Activated CD4-positive, alpha-beta T cell treated with anti-CD3 and anti-CD28 coated beads, Interleukin-2, amount 10 ng/mL, durations not matched to agents 24 days and 14 days (primary cell): ENCODE measurements at regions of chrX and their contacts with region 1.

Region 1: GRCh38 chrX:39859991-39860861 is 237.5 kb downstream of the BCOR start:
- DNase-seq: peak; percentile 92
- H3K4me3 Mint-ChIP-seq: peak overlapping the region; percentile 69
- H3K27ac Mint-ChIP-seq: peak overlapping the region; percentile 99
- H3K4me1 Mint-ChIP-seq: peaks cover 34% of the 10 kb centered on the region
- H3K27me3 Mint-ChIP-seq: no peaks in the 10 kb centered on the region

Region 2: DNA sequence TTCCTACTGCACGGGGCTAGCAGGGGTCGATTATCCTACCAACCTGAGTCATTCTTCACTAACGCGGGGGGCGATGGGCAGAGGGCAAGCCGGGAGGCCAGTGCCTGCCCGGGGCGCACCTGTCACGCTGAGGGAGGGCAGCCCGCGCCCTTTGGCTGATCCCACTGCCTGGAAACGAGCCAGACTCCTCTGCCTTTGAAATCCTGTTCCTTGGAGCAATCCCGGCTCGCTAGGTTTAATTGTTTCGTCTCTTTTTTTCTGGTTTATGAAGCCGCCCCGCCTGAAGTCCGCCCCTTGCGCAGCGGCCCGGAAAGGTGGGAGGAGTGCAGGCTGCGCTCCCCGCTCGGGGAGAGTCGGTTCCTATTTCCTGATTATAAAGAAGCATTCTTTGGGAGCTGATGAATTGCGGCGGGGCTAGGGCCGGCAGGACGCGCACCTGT is 246.7 kb before region 1 on chrX:
- intact Hi-C with region 1: loop called (anchors 10 kb)
- DNase-seq: peak; percentile 63
- H3K4me3 Mint-ChIP-seq: peak overlapping the region; percentile 90
- H3K27ac Mint-ChIP-seq: peak overlapping the region; percentile 98
- H3K4me1 Mint-ChIP-seq: peaks cover 26% of the 10 kb centered on the region
- H3K27me3 Mint-ChIP-seq: no peaks in the 10 kb centered on the region

Region 3: DNA sequence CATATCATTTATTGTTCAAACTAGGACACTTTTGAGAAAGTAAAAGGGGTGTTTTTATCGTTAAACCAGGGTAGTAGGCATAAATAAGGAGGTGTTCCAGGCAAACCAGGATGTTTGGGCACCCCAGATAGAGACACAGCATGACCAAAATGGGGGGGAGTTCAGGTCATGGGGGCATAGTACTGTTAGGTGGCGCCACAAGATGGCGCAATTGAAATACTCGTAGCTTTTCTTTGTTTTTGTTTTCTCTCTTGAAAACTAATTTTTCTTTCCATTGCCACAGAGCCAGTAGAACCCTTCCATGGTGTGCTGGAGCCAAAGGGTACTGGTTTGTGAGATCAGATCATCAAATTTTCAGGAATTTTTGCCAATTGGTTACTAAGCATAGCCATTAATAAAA is 45.8 kb before region 1 on chrX:
- intact Hi-C with region 1: loop called (anchors 1 kb)
- DNase-seq: peak; percentile 80
- H3K4me3 Mint-ChIP-seq: no peak overlapping the region
- H3K27ac Mint-ChIP-seq: no peak overlapping the region
- H3K4me1 Mint-ChIP-seq: peaks cover 30% of the 10 kb centered on the region
- H3K27me3 Mint-ChIP-seq: no peaks in the 10 kb centered on the region

Region 4: DNA sequence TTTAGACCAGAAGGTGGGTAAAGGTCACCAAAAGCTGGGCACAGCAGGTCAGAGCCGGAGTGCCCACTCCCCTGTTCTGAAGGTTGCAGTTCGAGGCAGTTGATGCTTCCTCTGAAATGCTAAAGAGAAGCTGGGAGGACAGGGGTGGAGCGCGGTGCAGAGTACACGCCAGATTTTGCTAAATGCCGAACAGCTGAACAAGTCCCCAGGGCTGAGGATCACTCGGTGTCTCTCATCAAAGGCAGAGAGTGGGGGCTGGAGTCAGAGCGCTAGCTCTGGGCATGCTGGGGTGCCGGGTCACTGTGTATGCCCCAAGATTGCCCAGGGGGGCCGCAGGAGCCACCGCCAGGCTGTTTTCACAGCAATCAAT is 40.6 kb after region 1 on chrX:
- intact Hi-C with region 1: loop called (anchors 1 kb)
- DNase-seq: no peak
- H3K4me3 Mint-ChIP-seq: no peak overlapping the region
- H3K27ac Mint-ChIP-seq: no peak overlapping the region
- H3K4me1 Mint-ChIP-seq: peaks cover 9% of the 10 kb centered on the region
- H3K27me3 Mint-ChIP-seq: peaks cover 2% of the 10 kb centered on the region

Region 5: DNA sequence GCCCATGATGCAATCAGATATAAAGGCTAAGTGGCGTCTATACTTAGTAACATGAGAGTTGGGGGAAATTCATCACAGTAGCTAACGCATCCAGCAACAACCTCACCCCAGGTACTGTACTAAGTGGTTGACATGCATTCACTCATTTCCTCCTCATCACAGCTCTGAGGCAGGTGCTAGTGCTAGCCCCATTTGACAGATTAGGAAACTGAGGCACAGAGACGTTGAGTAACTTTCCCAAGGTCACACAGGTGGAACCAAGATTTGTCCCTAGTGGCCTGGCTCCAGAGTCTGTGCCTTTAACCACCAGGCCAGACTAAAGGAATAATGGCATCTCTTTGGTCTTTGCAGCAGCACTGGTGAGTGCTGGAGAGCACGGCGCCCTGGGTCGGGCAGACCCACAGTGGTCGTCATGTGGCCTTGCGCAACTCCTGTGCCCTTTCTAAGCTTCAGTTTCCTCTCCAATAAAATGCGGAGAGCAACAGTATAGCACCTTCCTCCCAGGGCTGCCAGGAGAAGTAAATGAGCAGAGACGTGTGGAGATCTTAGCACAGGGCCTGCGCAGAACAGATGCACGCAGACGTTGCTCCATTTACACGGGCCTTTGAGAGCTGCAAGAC is 51.2 kb after region 1 on chrX:
- intact Hi-C with region 1: no loop called
- DNase-seq: no peak
- H3K4me3 Mint-ChIP-seq: no peak overlapping the region
- H3K27ac Mint-ChIP-seq: no peak overlapping the region
- H3K4me1 Mint-ChIP-seq: peaks cover 6% of the 10 kb centered on the region
- H3K27me3 Mint-ChIP-seq: no peaks in the 10 kb centered on the region

Region 6: DNA sequence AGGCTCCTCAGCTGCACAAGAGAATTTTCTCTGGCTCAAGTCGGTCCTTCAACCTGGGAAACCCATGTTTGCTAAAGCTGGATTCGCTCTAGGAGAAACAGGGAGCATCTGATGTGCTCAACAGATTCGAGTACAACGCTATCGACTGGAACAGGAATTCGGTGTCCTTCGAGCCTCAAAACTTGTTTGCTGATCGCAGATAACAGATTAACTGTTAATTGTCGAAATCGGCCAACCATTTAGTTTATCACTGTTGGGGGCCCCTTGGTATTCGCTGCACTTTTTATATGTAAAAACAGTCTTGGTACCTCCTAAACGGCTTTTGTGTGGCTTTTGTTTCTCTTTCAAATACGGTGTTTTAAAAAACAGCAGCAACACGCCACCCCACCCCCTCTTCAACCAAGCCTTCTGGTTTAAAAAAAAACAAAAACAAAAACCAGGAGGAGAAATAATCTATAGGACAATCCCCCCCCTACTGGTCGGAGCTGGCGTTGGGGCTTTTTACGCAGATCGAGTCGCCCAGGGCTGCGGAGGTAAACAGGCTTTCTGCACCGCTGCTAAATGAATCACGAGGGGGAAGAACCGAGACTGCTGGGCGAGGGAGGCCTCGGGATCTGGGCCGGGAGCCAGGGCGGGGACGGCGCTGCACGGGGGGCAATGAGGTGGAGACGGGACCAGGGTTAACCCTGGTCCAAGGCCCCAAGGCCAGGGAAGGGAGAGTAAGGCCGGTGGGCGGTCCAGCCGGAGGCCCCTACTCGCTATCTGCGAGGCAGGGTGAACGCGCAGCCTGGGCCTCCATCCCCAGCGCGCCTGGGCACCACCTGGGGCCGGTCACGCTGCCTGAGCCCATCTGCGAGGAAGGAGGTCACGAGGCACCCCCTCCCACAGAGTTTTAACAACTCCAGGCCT is 309.2 kb after region 1 on chrX:
- intact Hi-C with region 1: loop called (anchors 1 kb)
- DNase-seq: peak; percentile 93
- H3K4me3 Mint-ChIP-seq: peak overlapping the region; percentile 93
- H3K27ac Mint-ChIP-seq: peak overlapping the region; percentile 93
- H3K4me1 Mint-ChIP-seq: peaks cover 44% of the 10 kb centered on the region
- H3K27me3 Mint-ChIP-seq: peaks cover under 1% of the 10 kb centered on the region